ENCODE measurements at regions of chr4 and their contacts with region 1.

Region 1: GRCh38 chr4:89836897-89837384 is at the start of gene SNCA:
- DNase-seq: peak; percentile 89
- H3K4me3 ChIP-seq: peak within 1 kb of the TSS; percentile 56 to 93 (median 91)
- H3K27ac ChIP-seq: peak within 1 kb of the TSS; percentile 62
- H3K4me1 ChIP-seq: peaks cover 21% of the 10 kb centered on the region
- H3K27me3 ChIP-seq: no peaks in the 10 kb centered on the region
- CTCF ChIP-seq: no peak
- POLR2A ChIP-seq: peak; percentile 78
- total RNA-seq, gene SNCA: 116 and 124 TPM in 2 replicates

Region 2: GRCh38 chr4:89657931-89658700 is 178.8 kb before region 1 on chr4:
- CTCF ChIA-PET with region 1: interaction called, 15 read pairs
- POLR2A ChIA-PET with region 1: no interaction called
- dilution Hi-C with region 1: no loop called
- intact Hi-C with region 1: loop called (anchors 1 kb)
- DNase-seq: peak; percentile 82
- H3K4me3 ChIP-seq: no peak overlapping the region
- H3K27ac ChIP-seq: no peak overlapping the region
- H3K4me1 ChIP-seq: peaks cover 9% of the 10 kb centered on the region
- H3K27me3 ChIP-seq: no peaks in the 10 kb centered on the region
- CTCF ChIP-seq: peak; percentile 29 to 34
- POLR2A ChIP-seq: no peak

Region 3: GRCh38 chr4:89800012-89800516 is 36.9 kb before region 1 on chr4:
- CTCF ChIA-PET with region 1: interaction called, 6 read pairs
- POLR2A ChIA-PET with region 1: no interaction called
- dilution Hi-C with region 1: no loop called
- intact Hi-C with region 1: loop called (anchors 1 kb)
- DNase-seq: peak; percentile 91
- H3K4me3 ChIP-seq: peak overlapping the region in 1 of 3 experiments; percentile 45
- H3K27ac ChIP-seq: peak overlapping the region; percentile 90
- H3K4me1 ChIP-seq: peaks cover 53% of the 10 kb centered on the region
- H3K27me3 ChIP-seq: no peaks in the 10 kb centered on the region
- CTCF ChIP-seq: no peak
- POLR2A ChIP-seq: peak; percentile 77

Measured in endothelial cell of umbilical vein (primary cell).